Heart left ventricle (tissue), 16 donors: ENCODE measurements at regions of chr3 and their contacts with region 1.

Region 1: GRCh38 chr3:138594150-138594934 is at the start of gene CEP70:
- DNase-seq: peak; percentile 93 to 97 (median 95)
- ATAC-seq: peak; percentile 98 to 99 (median 99)
- H3K4me3 ChIP-seq: peak within 1 kb of the TSS; percentile 36 to 87 (median 74)
- H3K27ac ChIP-seq: peak within 1 kb of the TSS; percentile 67 to 93 (median 86)
- H3K4me1 ChIP-seq: peaks cover 0 to 17% (median 9%) of the 10 kb centered on the region in 12 donors
- H3K27me3 ChIP-seq: no peaks in the 10 kb centered on the region
- CTCF ChIP-seq: peak; percentile 75 to 95 (median 88)
- POLR2A ChIP-seq: peak; percentile 87 to 93
- total RNA-seq, gene CEP70: 10.1 to 29.8 (median 23.7) TPM

Region 2: GRCh38 chr3:138347960-138348753 is 246.2 kb before region 1 on chr3 and contains the start of gene MRAS:
- intact Hi-C with region 1: loop called in 1 of 10 experiments (anchors 10 kb)
- DNase-seq: peak; percentile 82 to 91 (median 89)
- ATAC-seq: peak; percentile 33 to 89 (median 72)
- H3K4me3 ChIP-seq: peak within 1 kb of the TSS; percentile 72 to 97 (median 83)
- H3K27ac ChIP-seq: peak within 1 kb of the TSS; percentile 89 to 99 (median 96)
- H3K4me1 ChIP-seq: peaks cover 0 to 45% (median 30%) of the 10 kb centered on the region in 12 donors
- H3K27me3 ChIP-seq: peaks cover 0 to 3% (median 0%) of the 10 kb centered on the region in 9 donors
- CTCF ChIP-seq: peak; percentile 15 to 69 (median 46)
- POLR2A ChIP-seq: peak; percentile 85 to 99
- total RNA-seq, gene MRAS: 227 to 413 (median 254) TPM

Region 3: GRCh38 chr3:138608322-138609135 is 14.2 kb after region 1 on chr3 and contains the start of gene FAIM:
- intact Hi-C with region 1: loop called in 1 of 10 experiments (anchors 2 kb)
- DNase-seq: peak; percentile 60 to 86 (median 71)
- ATAC-seq: peak; percentile 65 to 88 (median 86)
- H3K4me3 ChIP-seq: peak within 1 kb of the TSS; percentile 64 to 94 (median 84)
- H3K27ac ChIP-seq: peak within 1 kb of the TSS; percentile 89 to 99 (median 96)
- H3K4me1 ChIP-seq: peaks cover 0 to 15% (median 7%) of the 10 kb centered on the region in 12 donors
- H3K27me3 ChIP-seq: peaks cover 0 to 3% (median 0%) of the 10 kb centered on the region in 9 donors
- CTCF ChIP-seq: no peak
- POLR2A ChIP-seq: no peak
- total RNA-seq, gene FAIM: 2.0 to 5.9 (median 3.6) TPM

Region 4: DNA sequence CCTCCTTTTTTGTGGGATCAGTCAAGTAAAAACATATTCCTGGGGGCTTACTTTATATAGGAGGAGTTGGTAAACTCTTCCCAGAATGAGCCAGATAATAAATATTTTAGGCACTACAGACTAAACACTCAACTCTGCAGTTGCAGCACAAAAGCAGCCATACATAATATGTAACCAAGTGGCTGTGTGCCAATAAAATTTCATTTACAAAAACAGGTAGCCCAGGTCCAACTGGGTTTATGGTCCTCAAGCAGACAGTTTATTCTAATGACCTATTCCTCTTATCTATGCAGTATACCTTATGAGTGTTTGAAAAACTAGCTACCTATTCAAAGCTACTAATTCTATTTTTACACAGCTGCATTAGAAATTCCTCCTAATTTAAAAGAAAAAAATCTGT is 76.1 kb after region 1 on chr3:
- intact Hi-C with region 1: no loop called
- DNase-seq: no peak
- ATAC-seq: no peak
- H3K4me3 ChIP-seq: no peak overlapping the region
- H3K27ac ChIP-seq: no peak overlapping the region
- H3K4me1 ChIP-seq: peaks cover 0 to 14% (median 0%) of the 10 kb centered on the region in 12 donors
- H3K27me3 ChIP-seq: no peaks in the 10 kb centered on the region
- CTCF ChIP-seq: no peak
- POLR2A ChIP-seq: no peak

Region 5: DNA sequence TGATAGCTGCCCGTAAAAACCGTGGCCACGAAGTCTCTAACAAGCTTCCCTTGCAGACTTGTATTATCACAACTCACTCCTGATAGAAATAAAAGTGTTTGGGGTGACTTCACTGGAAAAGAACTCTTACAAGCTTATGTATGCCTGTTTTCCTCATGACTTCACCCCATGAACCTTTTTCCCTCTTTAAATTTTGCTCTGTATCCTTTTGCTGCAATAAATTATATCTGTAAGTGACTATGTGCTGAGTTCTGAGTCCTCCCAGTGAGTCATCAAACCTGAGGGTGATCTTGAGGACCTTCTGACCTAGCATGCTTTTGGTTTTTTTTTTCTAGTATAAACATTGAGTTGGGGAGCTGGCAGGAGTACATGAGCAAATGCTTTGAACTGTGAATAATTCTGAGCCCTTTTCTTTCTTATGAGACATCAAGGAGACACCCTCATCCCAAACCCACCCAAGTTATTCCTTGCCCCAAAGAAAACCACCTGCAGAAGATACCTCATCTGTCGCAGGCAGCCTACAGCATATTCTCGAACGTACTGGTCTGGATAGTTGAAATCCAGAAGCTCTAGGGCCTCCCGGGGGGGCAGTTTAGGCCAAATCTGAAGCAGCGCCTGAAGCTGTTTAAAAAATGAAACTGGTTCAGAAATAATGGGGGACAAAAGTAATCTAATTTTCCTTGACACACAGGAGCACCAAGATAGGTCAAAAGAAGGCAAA is 100.1 kb after region 1 on chr3:
- intact Hi-C with region 1: loop called in 4 of 10 experiments (anchors 10 kb)
- DNase-seq: no peak
- ATAC-seq: no peak
- H3K4me3 ChIP-seq: no peak overlapping the region
- H3K27ac ChIP-seq: no peak overlapping the region
- H3K4me1 ChIP-seq: peaks cover 0 to 6% (median 0%) of the 10 kb centered on the region in 12 donors
- H3K27me3 ChIP-seq: no peaks in the 10 kb centered on the region
- CTCF ChIP-seq: no peak
- POLR2A ChIP-seq: no peak

Region 6: GRCh38 chr3:138726946-138727730 is 132.8 kb after region 1 on chr3:
- intact Hi-C with region 1: no loop called
- DNase-seq: no peak
- ATAC-seq: no peak
- H3K4me3 ChIP-seq: no peak overlapping the region
- H3K27ac ChIP-seq: no peak overlapping the region
- H3K4me1 ChIP-seq: peaks cover 0 to 20% (median 3%) of the 10 kb centered on the region in 12 donors
- H3K27me3 ChIP-seq: no peaks in the 10 kb centered on the region
- CTCF ChIP-seq: no peak
- POLR2A ChIP-seq: no peak

Region 7: GRCh38 chr3:138850151-138850550 is 255.8 kb after region 1 on chr3:
- intact Hi-C with region 1: no loop called
- DNase-seq: peak in 4 of 5 donors; percentile 35 to 66 (median 42)
- ATAC-seq: no peak
- H3K4me3 ChIP-seq: no peak overlapping the region
- H3K27ac ChIP-seq: no peak overlapping the region
- H3K4me1 ChIP-seq: peaks cover 0 to 19% (median 0%) of the 10 kb centered on the region in 12 donors
- H3K27me3 ChIP-seq: no peaks in the 10 kb centered on the region
- CTCF ChIP-seq: no peak
- POLR2A ChIP-seq: no peak

Region 8: GRCh38 chr3:138923531-138923994 is 329.2 kb after region 1 on chr3:
- intact Hi-C with region 1: loop called in 4 of 10 experiments (anchors 2 to 5 kb)
- DNase-seq: peak; percentile 74 to 85 (median 74)
- ATAC-seq: peak in 3 of 4 donors; percentile 84 to 88 (median 87)
- H3K4me3 ChIP-seq: no peak overlapping the region
- H3K27ac ChIP-seq: no peak overlapping the region
- H3K4me1 ChIP-seq: peaks cover 0 to 3% (median 0%) of the 10 kb centered on the region in 12 donors
- H3K27me3 ChIP-seq: no peaks in the 10 kb centered on the region
- CTCF ChIP-seq: peak; percentile 83 to 93 (median 88)
- POLR2A ChIP-seq: no peak